Activated B cell treated with CpG ODN at 0.5 μM for 24 hours (primary cell): ENCODE measurements at regions of chr1 and their contacts with region 1.

Region 1: GRCh38 chr1:158274797-158275196 is 14.9 kb upstream of the CD1C start:
- DNase-seq: no peak
- ATAC-seq: peak; percentile 85
- H3K4me3 Mint-ChIP-seq: peak overlapping the region; percentile 29
- H3K27ac Mint-ChIP-seq: peak overlapping the region; percentile 73
- H3K4me1 Mint-ChIP-seq: peaks cover 39% of the 10 kb centered on the region
- H3K27me3 Mint-ChIP-seq: no peaks in the 10 kb centered on the region
- CTCF ChIP-seq: no peak

Region 2: GRCh38 chr1:157781048-157781447 is 493.7 kb before region 1 on chr1:
- CTCF ChIA-PET with region 1: no interaction called
- POLR2A ChIA-PET with region 1: no interaction called
- intact Hi-C with region 1: no loop called
- DNase-seq: no peak
- ATAC-seq: peak; percentile 22
- H3K4me3 Mint-ChIP-seq: peak overlapping the region; percentile 48
- H3K27ac Mint-ChIP-seq: peak overlapping the region; percentile 77
- H3K4me1 Mint-ChIP-seq: peaks cover 99% of the 10 kb centered on the region
- H3K27me3 Mint-ChIP-seq: no peaks in the 10 kb centered on the region
- CTCF ChIP-seq: no peak

Region 3: DNA sequence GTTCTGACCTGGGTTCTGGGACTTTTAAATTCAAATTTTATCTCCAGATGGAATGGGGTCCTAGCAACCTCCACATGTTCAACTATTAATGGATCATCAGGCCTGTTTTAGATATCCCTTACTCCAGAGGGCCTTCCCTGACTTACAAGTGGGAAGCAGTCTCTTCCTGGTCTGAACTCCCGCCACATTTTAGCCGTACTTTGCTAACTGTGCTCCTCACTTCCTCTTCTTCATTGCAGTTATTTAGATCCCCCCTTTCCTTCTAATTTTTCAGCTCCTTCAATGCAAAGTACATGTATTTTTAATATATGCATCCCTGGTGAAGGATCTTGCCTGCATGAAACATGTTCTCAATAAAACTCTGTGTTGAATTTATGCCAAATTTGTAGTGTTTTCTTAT is 16.9 kb before region 1 on chr1:
- CTCF ChIA-PET with region 1: no interaction called
- POLR2A ChIA-PET with region 1: no interaction called
- intact Hi-C with region 1: loop called (anchors 2 kb)
- DNase-seq: no peak
- ATAC-seq: no peak
- H3K4me3 Mint-ChIP-seq: no peak overlapping the region
- H3K27ac Mint-ChIP-seq: no peak overlapping the region
- H3K4me1 Mint-ChIP-seq: peaks cover 23% of the 10 kb centered on the region
- H3K27me3 Mint-ChIP-seq: no peaks in the 10 kb centered on the region
- CTCF ChIP-seq: no peak

Region 4: GRCh38 chr1:158323866-158324265 is 49.1 kb after region 1 on chr1:
- CTCF ChIA-PET with region 1: no interaction called
- POLR2A ChIA-PET with region 1: no interaction called
- intact Hi-C with region 1: no loop called
- DNase-seq: no peak
- ATAC-seq: no peak
- H3K4me3 Mint-ChIP-seq: no peak overlapping the region
- H3K27ac Mint-ChIP-seq: no peak overlapping the region
- H3K4me1 Mint-ChIP-seq: peaks cover 28% of the 10 kb centered on the region
- H3K27me3 Mint-ChIP-seq: no peaks in the 10 kb centered on the region
- CTCF ChIP-seq: no peak

Region 5: DNA sequence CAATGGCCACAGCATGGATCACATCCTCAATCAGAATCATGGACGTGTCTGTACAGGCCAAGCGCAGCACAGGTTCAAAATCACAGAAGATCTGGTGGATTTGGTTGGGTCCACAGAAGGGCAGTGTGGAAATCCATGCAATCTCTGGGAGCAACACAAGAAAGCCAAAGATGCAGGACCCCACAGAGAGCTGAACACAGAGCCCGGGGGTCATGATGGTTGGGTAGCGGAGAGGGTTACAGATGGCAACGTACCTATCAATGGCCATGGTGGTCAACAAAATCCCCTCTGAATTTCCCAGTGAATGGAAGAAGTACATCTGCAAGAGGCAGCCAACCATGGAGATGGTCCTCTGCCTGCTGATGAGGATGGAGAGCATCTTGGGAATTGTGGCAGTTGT is 449.6 kb after region 1 on chr1:
- CTCF ChIA-PET with region 1: no interaction called
- POLR2A ChIA-PET with region 1: no interaction called
- intact Hi-C with region 1: no loop called
- DNase-seq: no peak
- ATAC-seq: no peak
- H3K4me3 Mint-ChIP-seq: no peak overlapping the region
- H3K27ac Mint-ChIP-seq: no peak overlapping the region
- H3K4me1 Mint-ChIP-seq: no peaks in the 10 kb centered on the region
- H3K27me3 Mint-ChIP-seq: peaks cover 18% of the 10 kb centered on the region
- CTCF ChIP-seq: no peak